ENCODE measurements at regions of chr16 and their contacts with region 1.

Region 1: GRCh38 chr16:55465077-55465896 is 13.7 kb upstream of the MMP2 start:
- DNase-seq: peak; percentile 74 to 82
- ATAC-seq: peak; percentile 86 to 96
- H3K4me3 ChIP-seq: no peak overlapping the region
- H3K27ac ChIP-seq: no peak overlapping the region
- H3K4me1 ChIP-seq: peaks cover under 1% of the 10 kb centered on the region; the same call in 1 of the 3 replicates
- CTCF ChIP-seq: peak; percentile 100
- EP300 ChIP-seq: no peak
- POLR2A ChIP-seq: no peak
- RAD21 ChIP-seq: peak; percentile 100

Region 2: DNA sequence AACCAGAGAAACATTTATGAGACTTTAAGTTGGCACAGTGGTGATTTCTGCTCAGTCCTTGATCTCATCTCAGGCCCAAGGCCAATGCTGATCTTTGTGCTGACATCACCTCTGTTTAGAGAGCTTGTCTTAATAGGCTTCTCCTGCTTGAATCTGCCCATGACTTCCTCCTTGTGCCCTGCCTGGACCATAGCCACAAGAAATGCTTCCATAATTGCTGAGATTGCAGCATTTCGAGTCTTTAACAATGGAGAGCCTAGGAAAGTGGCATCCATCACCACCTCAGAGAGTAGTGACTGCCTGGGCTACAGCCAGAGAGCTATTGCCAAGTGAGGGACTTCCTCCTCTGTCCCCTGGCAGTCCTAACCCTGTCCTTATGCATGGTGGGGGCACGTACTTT is 11.4 kb before region 1 on chr16:
- CTCF ChIA-PET with region 1: interaction called, 28 read pairs
- POLR2A ChIA-PET with region 1: no interaction called
- DNase-seq: no peak
- ATAC-seq: no peak
- H3K4me3 ChIP-seq: no peak overlapping the region
- H3K27ac ChIP-seq: no peak overlapping the region
- H3K4me1 ChIP-seq: no peaks in the 10 kb centered on the region
- CTCF ChIP-seq: no peak
- EP300 ChIP-seq: no peak
- POLR2A ChIP-seq: no peak
- RAD21 ChIP-seq: no peak

Region 3: GRCh38 chr16:55494994-55495421 is 29.7 kb after region 1 on chr16:
- CTCF ChIA-PET with region 1: interaction called, 54 read pairs
- POLR2A ChIA-PET with region 1: no interaction called
- DNase-seq: peak in 1 of 2 experiments; percentile 62
- ATAC-seq: peak; percentile 67 to 91; a peak in 4 of 6 replicates
- H3K4me3 ChIP-seq: no peak overlapping the region
- H3K27ac ChIP-seq: no peak overlapping the region
- H3K4me1 ChIP-seq: 0 out of 3 replicates have a peak, but pooled peaks cover 5% of the 10 kb centered on the region
- CTCF ChIP-seq: no peak
- EP300 ChIP-seq: no peak
- POLR2A ChIP-seq: no peak
- RAD21 ChIP-seq: peak; percentile 50 to 59; a peak in 4 of 5 replicates

Region 4: DNA sequence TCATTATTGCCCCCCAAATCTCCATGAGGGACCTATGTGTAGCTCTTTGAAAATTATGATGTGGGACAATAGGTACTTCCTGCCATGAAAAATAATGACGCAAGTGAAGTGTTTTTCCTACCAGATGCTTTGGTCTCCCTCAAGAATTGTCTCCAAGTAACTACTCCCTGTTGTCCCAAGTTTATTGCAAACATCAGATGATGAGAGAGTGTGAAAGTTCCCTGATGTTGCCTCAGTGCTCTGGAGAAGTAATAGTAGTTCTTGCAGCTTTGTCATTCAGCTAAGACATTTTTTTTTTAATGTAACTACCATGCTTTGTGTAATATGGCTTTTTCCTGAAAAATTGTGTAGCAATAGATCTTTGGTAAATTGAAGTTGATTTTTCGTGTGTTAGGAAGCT is 63.7 kb after region 1 on chr16:
- CTCF ChIA-PET with region 1: interaction called, 107 read pairs
- POLR2A ChIA-PET with region 1: no interaction called
- DNase-seq: no peak
- ATAC-seq: no peak
- H3K4me3 ChIP-seq: no peak overlapping the region
- H3K27ac ChIP-seq: no peak overlapping the region
- H3K4me1 ChIP-seq: no peaks in the 10 kb centered on the region
- CTCF ChIP-seq: no peak
- EP300 ChIP-seq: no peak
- POLR2A ChIP-seq: no peak
- RAD21 ChIP-seq: no peak

Region 5: GRCh38 chr16:55559233-55559632 is 93.9 kb after region 1 on chr16:
- CTCF ChIA-PET with region 1: interaction called, 19 read pairs
- POLR2A ChIA-PET with region 1: no interaction called
- DNase-seq: no peak
- ATAC-seq: no peak
- H3K4me3 ChIP-seq: no peak overlapping the region
- H3K27ac ChIP-seq: no peak overlapping the region
- H3K4me1 ChIP-seq: no peaks in the 10 kb centered on the region
- CTCF ChIP-seq: no peak
- EP300 ChIP-seq: no peak
- POLR2A ChIP-seq: no peak
- RAD21 ChIP-seq: no peak

Region 6: GRCh38 chr16:55672471-55672870 is 207.2 kb after region 1 on chr16:
- CTCF ChIA-PET with region 1: interaction called, 11 read pairs
- POLR2A ChIA-PET with region 1: no interaction called
- DNase-seq: no peak
- ATAC-seq: no peak
- H3K4me3 ChIP-seq: no peak overlapping the region
- H3K27ac ChIP-seq: no peak overlapping the region
- H3K4me1 ChIP-seq: peaks cover 6% of the 10 kb centered on the region; the same call in 2 of the 3 replicates
- CTCF ChIP-seq: no peak
- EP300 ChIP-seq: no peak
- POLR2A ChIP-seq: no peak
- RAD21 ChIP-seq: no peak

Region 7: DNA sequence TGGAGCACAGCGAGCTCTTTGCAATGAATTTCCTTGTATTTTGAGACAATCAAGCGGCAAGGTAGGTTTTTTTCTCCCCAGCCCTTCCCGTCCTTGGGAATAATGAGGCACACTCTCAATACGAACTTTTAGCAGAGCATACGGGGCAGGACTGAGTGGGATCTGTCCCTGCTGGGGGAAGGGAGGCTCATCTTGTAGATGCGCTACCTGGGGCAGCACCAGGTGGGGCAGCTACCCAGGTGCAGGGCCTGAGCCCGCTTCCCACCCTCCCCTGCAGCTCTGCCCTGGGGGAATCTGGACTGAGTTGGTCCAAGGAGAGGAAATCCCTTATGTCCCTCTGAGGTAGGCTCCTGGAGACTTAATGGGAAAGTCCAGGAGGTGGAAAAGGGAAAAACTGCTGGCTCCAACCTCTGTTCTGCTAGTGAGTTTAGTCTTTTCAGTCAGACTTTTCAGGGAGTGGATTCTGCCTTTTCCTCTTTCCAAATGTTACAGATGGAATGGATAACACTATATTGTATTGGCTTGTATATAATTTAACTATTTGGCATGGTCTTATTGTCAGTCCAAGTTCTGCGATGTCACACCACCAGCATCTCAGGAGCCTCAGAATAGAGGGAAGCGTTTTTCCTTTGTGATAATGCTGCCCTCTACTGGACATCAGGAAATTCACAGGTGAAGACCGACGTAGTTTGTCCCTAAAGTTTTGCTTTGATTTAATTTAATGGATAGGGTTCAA is 377.2 kb after region 1 on chr16:
- CTCF ChIA-PET with region 1: interaction called, 15 read pairs
- POLR2A ChIA-PET with region 1: no interaction called
- DNase-seq: peak; percentile 36 to 64
- ATAC-seq: peak; percentile 84 to 92; a peak in 5 of 6 replicates
- H3K4me3 ChIP-seq: no peak overlapping the region
- H3K27ac ChIP-seq: no peak overlapping the region
- H3K4me1 ChIP-seq: no peaks in the 10 kb centered on the region
- CTCF ChIP-seq: peak; percentile 76
- EP300 ChIP-seq: no peak
- POLR2A ChIP-seq: no peak
- RAD21 ChIP-seq: peak; percentile 82 to 92

Region 8: GRCh38 chr16:55925242-55925641 is 460.0 kb after region 1 on chr16:
- CTCF ChIA-PET with region 1: no interaction called
- POLR2A ChIA-PET with region 1: no interaction called
- DNase-seq: no peak
- ATAC-seq: no peak
- H3K4me3 ChIP-seq: no peak overlapping the region
- H3K27ac ChIP-seq: no peak overlapping the region
- H3K4me1 ChIP-seq: no peaks in the 10 kb centered on the region
- CTCF ChIP-seq: no peak
- EP300 ChIP-seq: no peak
- POLR2A ChIP-seq: no peak
- RAD21 ChIP-seq: no peak

Measured in A549 (cell line).